CD8-positive, alpha-beta T cell (primary cell): ENCODE measurements at regions of chr1 and their contacts with region 1.

Region 1: DNA sequence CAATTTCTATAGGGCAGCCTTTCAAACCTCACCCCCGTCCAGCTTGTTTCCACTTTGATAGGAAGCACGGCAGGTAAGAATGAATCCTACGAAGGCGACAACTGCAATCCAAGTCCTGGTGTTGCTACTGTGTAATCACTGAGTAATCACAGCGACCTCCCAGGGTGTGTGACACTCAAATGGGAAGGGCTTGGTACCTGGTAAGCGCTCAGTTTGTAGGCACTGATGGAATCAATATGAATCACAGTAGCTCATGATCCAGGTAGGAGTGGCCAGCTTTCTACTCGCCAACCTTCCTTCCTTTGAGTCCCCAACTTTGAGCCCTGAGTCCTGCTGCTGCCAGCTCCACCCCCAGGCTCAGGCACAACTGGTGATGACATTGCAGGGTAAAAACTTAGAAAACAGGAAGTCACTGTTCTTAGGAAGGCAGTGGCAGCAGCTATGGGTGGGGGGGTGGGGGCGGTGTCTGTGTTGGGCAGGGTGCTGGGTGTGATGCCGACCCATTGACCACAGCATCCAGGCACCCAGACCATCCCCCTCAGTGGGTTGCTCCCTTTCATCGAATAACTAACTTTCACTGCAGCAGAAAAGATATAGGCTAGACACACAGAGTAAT is 70.7 kb downstream of the CD247 start:
- DNase-seq: peak in 8 of 9 experiments; percentile 31 to 89 (median 76)
- ATAC-seq: peak; percentile 82
- H3K4me3 ChIP-seq: peak overlapping the region; percentile 19 to 32
- H3K4me3 Mint-ChIP-seq: peak overlapping the region; percentile 68
- H3K27ac ChIP-seq: peak overlapping the region; percentile 82 to 89
- H3K27ac Mint-ChIP-seq: peak overlapping the region; percentile 97
- H3K4me1 ChIP-seq: peaks cover 73% of the 10 kb centered on the region
- H3K4me1 Mint-ChIP-seq: peaks cover 85% of the 10 kb centered on the region
- H3K27me3 ChIP-seq: no peaks in the 10 kb centered on the region
- H3K27me3 Mint-ChIP-seq: no peaks in the 10 kb centered on the region
- CTCF ChIP-seq: no peak

Region 2: DNA sequence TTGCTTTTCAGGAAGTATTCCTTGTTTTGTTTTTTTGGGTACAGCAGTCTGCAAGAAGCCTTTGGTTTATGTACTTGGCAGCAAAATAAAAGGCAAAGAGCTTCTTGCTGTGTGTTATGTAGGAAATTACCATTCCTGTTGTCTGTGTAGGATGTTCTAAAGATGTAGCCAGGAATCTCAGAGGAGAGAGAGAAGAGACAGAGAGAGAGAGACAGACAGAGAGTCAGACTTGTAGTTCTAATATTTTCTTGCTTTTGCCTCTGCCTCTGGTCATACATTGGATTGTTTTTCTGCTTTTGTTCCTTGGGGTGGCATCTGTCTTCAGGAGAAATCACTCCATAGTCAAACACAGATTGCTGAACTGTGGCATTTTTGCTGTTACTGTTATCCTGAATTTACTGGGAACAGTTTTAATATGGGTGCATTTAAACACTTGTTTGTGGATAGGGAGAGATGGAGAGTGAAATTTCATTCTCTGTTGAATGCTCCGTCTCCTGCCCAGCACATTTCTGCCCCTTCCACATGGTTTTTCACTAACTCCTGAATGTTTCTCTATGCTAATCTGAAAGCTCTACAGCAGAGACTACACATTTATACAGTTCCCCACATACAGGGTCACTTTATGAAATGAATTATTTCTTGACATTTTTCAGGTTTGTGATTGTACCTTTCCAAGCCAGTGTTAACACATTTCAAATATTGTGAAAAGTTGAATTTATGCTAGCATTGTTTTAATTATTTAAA is 177.1 kb before region 1 on chr1:
- CTCF ChIA-PET with region 1: interaction called, 24 read pairs
- POLR2A ChIA-PET with region 1: interaction called, 3 read pairs
- intact Hi-C with region 1: loop called (anchors 1 to 2 kb)
- DNase-seq: no peak
- ATAC-seq: no peak
- H3K4me3 ChIP-seq: no peak overlapping the region
- H3K4me3 Mint-ChIP-seq: no peak overlapping the region
- H3K27ac ChIP-seq: no peak overlapping the region
- H3K27ac Mint-ChIP-seq: no peak overlapping the region
- H3K4me1 ChIP-seq: peaks cover 9% of the 10 kb centered on the region
- H3K4me1 Mint-ChIP-seq: peaks cover 43% of the 10 kb centered on the region
- H3K27me3 ChIP-seq: no peaks in the 10 kb centered on the region
- H3K27me3 Mint-ChIP-seq: no peaks in the 10 kb centered on the region
- CTCF ChIP-seq: no peak

Region 3: DNA sequence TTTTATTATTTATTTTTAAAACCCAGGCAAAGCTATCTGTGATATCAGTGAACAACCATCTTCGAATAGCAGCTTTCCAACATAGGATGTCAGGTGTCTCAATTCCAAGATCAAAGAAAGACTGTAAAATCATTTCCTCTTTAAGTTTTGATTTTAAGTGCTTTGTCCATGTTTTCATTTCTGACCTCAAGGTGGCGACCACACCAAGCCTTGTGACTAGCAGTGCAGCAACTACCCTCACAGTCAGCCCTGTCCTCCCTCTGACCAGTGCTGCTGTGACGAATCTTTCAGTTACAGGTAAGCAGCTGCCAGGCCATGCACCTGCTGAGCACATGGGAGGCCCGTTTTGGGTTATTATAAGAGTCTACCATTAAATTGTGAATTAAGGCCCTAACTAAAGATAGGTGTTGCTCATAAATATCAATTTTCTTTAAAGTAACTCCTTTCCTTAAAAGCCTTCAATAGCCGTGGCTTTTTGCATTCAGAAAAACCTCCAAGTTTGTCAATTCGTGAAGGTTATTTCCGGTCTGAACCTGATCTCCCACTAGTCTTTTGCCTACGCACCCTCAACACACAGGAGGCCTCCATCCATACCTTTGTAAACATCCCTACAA is 46.3 kb before region 1 on chr1:
- CTCF ChIA-PET with region 1: interaction called, 25 read pairs
- POLR2A ChIA-PET with region 1: no interaction called
- intact Hi-C with region 1: loop called (anchors 1 to 2 kb)
- DNase-seq: peak; percentile 4 to 79 (median 51)
- ATAC-seq: peak; percentile 73
- H3K4me3 ChIP-seq: no peak overlapping the region
- H3K4me3 Mint-ChIP-seq: no peak overlapping the region
- H3K27ac ChIP-seq: no peak overlapping the region
- H3K27ac Mint-ChIP-seq: no peak overlapping the region
- H3K4me1 ChIP-seq: no peaks in the 10 kb centered on the region
- H3K4me1 Mint-ChIP-seq: peaks cover 5% of the 10 kb centered on the region
- H3K27me3 ChIP-seq: no peaks in the 10 kb centered on the region
- H3K27me3 Mint-ChIP-seq: no peaks in the 10 kb centered on the region
- CTCF ChIP-seq: peak; percentile 36

Region 4: GRCh38 chr1:167467126-167467710 is 19.6 kb after region 1 on chr1:
- CTCF ChIA-PET with region 1: interaction called, 8 read pairs
- POLR2A ChIA-PET with region 1: interaction called, 6 read pairs
- intact Hi-C with region 1: loop called in 1 of 2 experiments (anchors 1 kb)
- DNase-seq: no peak
- ATAC-seq: no peak
- H3K4me3 ChIP-seq: no peak overlapping the region
- H3K4me3 Mint-ChIP-seq: no peak overlapping the region
- H3K27ac ChIP-seq: peak overlapping the region in 1 of 2 experiments; percentile 46
- H3K27ac Mint-ChIP-seq: peak overlapping the region; percentile 55
- H3K4me1 ChIP-seq: peaks cover 72% of the 10 kb centered on the region
- H3K4me1 Mint-ChIP-seq: peaks cover 86% of the 10 kb centered on the region
- H3K27me3 ChIP-seq: no peaks in the 10 kb centered on the region
- H3K27me3 Mint-ChIP-seq: no peaks in the 10 kb centered on the region
- CTCF ChIP-seq: no peak

Region 5: GRCh38 chr1:167486090-167486824 is 38.6 kb after region 1 on chr1:
- CTCF ChIA-PET with region 1: interaction called, 8 read pairs
- POLR2A ChIA-PET with region 1: interaction called, 4 read pairs
- intact Hi-C with region 1: loop called (anchors 5 kb)
- DNase-seq: peak in 4 of 9 experiments; percentile 23 to 71 (median 52)
- ATAC-seq: no peak
- H3K4me3 ChIP-seq: peak overlapping the region in 1 of 2 experiments; percentile 13
- H3K4me3 Mint-ChIP-seq: peak overlapping the region; percentile 78
- H3K27ac ChIP-seq: peak overlapping the region; percentile 36 to 77
- H3K27ac Mint-ChIP-seq: peak overlapping the region; percentile 94
- H3K4me1 ChIP-seq: peaks cover 96% of the 10 kb centered on the region
- H3K4me1 Mint-ChIP-seq: peaks cover 93% of the 10 kb centered on the region
- H3K27me3 ChIP-seq: no peaks in the 10 kb centered on the region
- H3K27me3 Mint-ChIP-seq: no peaks in the 10 kb centered on the region
- CTCF ChIP-seq: no peak

Region 6: DNA sequence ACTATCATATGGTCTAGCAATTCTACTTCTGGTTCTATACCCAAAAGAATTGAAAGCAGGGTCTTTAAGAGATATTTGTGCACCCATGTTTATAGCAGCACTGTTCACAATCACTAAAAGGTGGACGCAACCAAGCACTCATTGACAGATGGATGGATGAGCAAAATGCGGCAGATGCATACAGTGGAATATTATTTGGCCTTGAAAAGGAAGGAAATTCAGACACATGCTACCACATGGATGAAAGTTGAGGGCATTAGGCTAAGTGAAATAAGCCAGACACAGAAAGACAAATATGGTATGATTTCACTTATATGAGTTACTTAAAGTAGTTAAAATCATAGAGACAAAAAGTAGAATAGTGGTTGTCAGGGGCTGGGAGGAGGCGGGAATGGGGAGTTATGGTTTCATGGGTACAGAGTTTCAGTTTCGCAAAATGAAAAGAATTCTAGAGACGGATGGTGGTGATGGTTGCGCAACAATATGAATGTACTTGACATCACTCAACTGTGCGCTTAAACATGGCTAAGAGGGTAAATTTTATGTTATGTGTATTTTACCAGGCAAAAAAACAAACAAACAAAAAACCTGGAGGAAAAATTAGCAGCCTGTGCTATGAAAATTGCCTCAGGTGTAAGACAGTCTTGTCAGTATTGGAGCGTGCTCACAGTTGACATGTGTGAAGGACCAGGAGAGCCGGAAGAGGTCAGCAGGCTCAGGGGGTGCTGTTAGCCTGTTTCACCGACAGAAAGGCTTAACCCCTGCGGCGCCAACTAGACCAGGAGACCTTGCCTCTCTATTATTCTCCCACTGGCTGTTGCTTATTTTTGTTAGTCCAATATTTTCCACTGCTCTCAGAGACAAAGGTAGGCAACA is 44.2 kb after region 1 on chr1:
- CTCF ChIA-PET with region 1: interaction called, 8 read pairs
- POLR2A ChIA-PET with region 1: interaction called, 3 read pairs
- intact Hi-C with region 1: loop called in 1 of 2 experiments (anchors 5 kb)
- DNase-seq: peak in 5 of 9 experiments; percentile 22 to 80 (median 53)
- ATAC-seq: peak; percentile 17
- H3K4me3 ChIP-seq: peak overlapping the region in 1 of 2 experiments; percentile 18
- H3K4me3 Mint-ChIP-seq: peak overlapping the region; percentile 68
- H3K27ac ChIP-seq: peak overlapping the region; percentile 30 to 86
- H3K27ac Mint-ChIP-seq: peak overlapping the region; percentile 95
- H3K4me1 ChIP-seq: peaks cover 95% of the 10 kb centered on the region
- H3K4me1 Mint-ChIP-seq: peaks cover 90% of the 10 kb centered on the region
- H3K27me3 ChIP-seq: no peaks in the 10 kb centered on the region
- H3K27me3 Mint-ChIP-seq: no peaks in the 10 kb centered on the region
- CTCF ChIP-seq: no peak